Gastrocnemius medialis (tissue), 4 donors: ENCODE measurements at regions of chr6 and their contacts with region 1.

Region 1: GRCh38 chr6:159701411-159701999 is 8.5 kb upstream of the SOD2 start:
- DNase-seq: peak; percentile 55 to 73
- ATAC-seq: peak; percentile 96
- H3K4me3 ChIP-seq: no peak overlapping the region
- H3K27ac ChIP-seq: peak overlapping the region; percentile 80 to 98 (median 90)
- H3K4me1 ChIP-seq: peaks cover 21 to 50% of the 10 kb centered on the region in 2 donors
- H3K27me3 ChIP-seq: no peaks in the 10 kb centered on the region
- CTCF ChIP-seq: no peak
- POLR2A ChIP-seq: peak; percentile 13 to 47

Region 2: DNA sequence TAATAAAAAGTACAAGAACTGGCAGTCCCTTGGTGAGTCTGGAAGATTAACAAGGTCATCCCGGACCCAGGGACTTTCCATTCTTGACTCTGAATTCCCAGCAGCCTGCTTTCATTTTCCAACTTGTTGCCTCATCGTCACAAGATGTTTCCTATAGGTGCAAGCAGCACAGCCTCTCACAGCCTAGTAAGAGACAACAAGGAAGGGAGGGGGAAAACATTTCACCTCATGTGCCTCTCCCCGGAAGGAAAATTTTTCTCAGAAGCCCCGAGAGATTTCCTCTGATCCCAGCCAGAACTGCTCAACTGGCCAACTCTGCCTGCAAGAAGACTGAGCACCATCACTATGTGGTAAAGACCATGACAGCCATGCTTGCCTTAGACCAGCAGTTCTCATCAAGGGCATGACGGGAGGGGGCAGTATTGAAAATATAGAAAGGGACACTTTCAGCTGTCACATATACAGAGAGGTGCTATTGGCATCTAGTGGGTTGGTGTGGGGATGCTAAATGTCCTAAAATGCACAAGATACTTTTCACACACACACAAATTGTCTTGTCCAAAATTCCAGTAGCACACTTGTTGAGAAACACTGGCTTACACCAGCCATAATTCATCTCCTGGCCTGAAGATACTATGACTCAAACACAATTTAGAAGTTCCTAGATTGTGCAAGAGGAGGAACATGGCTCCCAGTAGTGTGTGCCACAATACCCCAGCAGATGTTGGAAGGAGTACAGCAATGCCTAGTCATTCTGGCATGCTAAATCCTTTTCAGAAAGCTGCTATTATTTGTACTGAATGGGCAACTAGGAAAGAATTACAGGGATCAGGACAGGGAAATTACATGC is 15.0 kb after region 1 on chr6:
- in situ Hi-C with region 1: no loop called
- intact Hi-C with region 1: loop called (anchors 2 kb)
- DNase-seq: peak; percentile 86 to 88
- ATAC-seq: peak; percentile 94 to 96
- H3K4me3 ChIP-seq: peak overlapping the region; percentile 24 to 42 (median 38)
- H3K27ac ChIP-seq: peak overlapping the region; percentile 83 to 97 (median 94)
- H3K4me1 ChIP-seq: peaks cover 20 to 41% of the 10 kb centered on the region in 2 donors
- H3K27me3 ChIP-seq: no peaks in the 10 kb centered on the region
- CTCF ChIP-seq: peak in 3 of 5 experiments; percentile 8 to 24 (median 10)
- POLR2A ChIP-seq: peak in 1 of 2 donors; percentile 55

Region 3: GRCh38 chr6:159753081-159753872 is 51.8 kb after region 1 on chr6:
- in situ Hi-C with region 1: no loop called
- intact Hi-C with region 1: loop called (anchors 1 kb)
- DNase-seq: no peak
- ATAC-seq: peak in 1 of 2 donors; percentile 69
- H3K4me3 ChIP-seq: no peak overlapping the region
- H3K27ac ChIP-seq: peak overlapping the region in 1 of 4 donors; percentile 2
- H3K4me1 ChIP-seq: peaks cover 0 to 5% of the 10 kb centered on the region in 2 donors
- H3K27me3 ChIP-seq: no peaks in the 10 kb centered on the region
- CTCF ChIP-seq: no peak
- POLR2A ChIP-seq: no peak